ENCODE measurements at regions of chr20 and their contacts with region 1.

Region 1: DNA sequence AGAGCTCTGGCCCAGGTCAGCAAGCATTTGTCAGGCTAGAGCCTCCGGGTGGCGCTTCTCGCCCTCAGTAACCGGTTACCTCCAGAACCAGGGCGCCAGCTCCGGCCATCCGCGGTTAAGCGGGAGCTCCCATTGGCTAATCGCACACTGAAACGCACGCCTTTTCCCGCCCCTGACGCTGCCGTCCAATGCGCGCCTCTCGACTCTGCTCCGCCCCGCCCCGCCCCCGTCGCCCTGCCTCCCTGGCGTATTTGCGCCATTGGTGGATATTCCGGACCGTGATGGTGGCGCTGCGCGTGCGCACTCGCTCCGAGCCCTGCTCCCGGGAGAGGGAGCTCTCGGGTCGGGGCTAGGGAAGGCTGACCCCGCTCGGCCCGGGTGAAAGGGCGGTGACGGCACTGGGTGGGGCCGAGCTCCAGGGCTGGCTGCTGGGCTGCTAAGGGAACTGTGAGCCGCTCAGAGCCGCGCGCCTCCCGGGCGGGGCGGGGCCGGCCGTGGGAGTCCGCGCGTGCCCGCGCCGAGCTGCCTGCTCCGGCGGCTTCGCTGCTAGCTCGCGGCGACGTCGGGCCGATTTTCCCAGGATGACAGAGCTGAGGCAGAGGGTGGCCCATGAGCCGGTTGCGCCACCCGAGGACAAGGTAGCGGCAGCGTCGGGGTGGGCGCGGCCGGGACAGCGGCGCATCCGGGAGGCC is at the start of gene CDS2:
- DNase-seq: peak; percentile 100
- ATAC-seq: peak; percentile 98
- H3K4me3 ChIP-seq: peak within 1 kb of the TSS; percentile 91
- H3K27ac ChIP-seq: peak within 1 kb of the TSS; percentile 97
- H3K4me1 ChIP-seq: peaks cover 26% of the 10 kb centered on the region
- H3K27me3 ChIP-seq: no peaks in the 10 kb centered on the region
- CTCF ChIP-seq: peak; percentile 61
- total RNA-seq, gene CDS2: 63.3 TPM

Region 2: GRCh38 chr20:5191829-5192569 is 65.3 kb after region 1 on chr20:
- intact Hi-C with region 1: loop called (anchors 10 kb)
- DNase-seq: no peak
- ATAC-seq: peak; percentile 82 to 85
- H3K4me3 ChIP-seq: no peak overlapping the region
- H3K27ac ChIP-seq: peak overlapping the region; percentile 46
- H3K4me1 ChIP-seq: no peaks in the 10 kb centered on the region
- H3K27me3 ChIP-seq: no peaks in the 10 kb centered on the region
- CTCF ChIP-seq: peak; percentile 72

Region 3: GRCh38 chr20:5234158-5234557 is 107.5 kb after region 1 on chr20:
- intact Hi-C with region 1: no loop called
- DNase-seq: no peak
- ATAC-seq: no peak
- H3K4me3 ChIP-seq: no peak overlapping the region
- H3K27ac ChIP-seq: no peak overlapping the region
- H3K4me1 ChIP-seq: no peaks in the 10 kb centered on the region
- H3K27me3 ChIP-seq: no peaks in the 10 kb centered on the region
- CTCF ChIP-seq: no peak